Esophagus muscularis mucosa (tissue), 4 donors: ENCODE measurements at regions of chr19 and their contacts with region 1.

Region 1: DNA sequence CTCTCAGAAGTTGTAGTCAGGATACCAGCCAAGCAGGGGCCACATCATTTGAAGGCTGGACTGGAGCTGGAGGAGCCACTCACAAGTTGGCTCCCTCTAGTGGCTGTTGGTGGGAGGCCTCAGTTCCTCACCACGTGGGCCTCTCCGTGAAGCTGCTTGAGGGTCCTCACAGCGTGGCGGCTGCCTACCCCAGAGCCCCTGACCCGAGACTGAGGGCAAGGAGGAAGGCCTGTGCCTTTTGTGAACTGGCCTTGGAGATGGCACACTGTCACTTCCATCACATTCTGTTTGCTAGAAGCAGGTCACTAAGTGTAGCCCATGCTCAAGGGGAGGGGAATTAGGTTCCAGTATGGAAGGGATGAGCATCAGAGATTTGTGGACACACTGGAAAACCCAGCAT is 14.6 kb downstream of the GNA11 start:
- DNase-seq: no peak
- H3K4me3 ChIP-seq: no peak overlapping the region
- H3K27ac ChIP-seq: peak overlapping the region in 2 of 4 donors; percentile 22 to 45
- H3K4me1 ChIP-seq: peaks cover 39 to 76% (median 58%) of the 10 kb centered on the region in 4 donors
- H3K27me3 ChIP-seq: no peaks in the 10 kb centered on the region
- CTCF ChIP-seq: peak; percentile 72 to 91 (median 72)
- EP300 ChIP-seq: no peak
- POLR2A ChIP-seq: no peak

Region 2: GRCh38 chr19:2962045-2962561 is 146.7 kb before region 1 on chr19:
- intact Hi-C with region 1: loop called (anchors 5 kb)
- DNase-seq: peak; percentile 95
- H3K4me3 ChIP-seq: peak overlapping the region in 2 of 4 donors; percentile 24 to 42
- H3K27ac ChIP-seq: no peak overlapping the region
- H3K4me1 ChIP-seq: peaks cover 3 to 6% (median 5%) of the 10 kb centered on the region in 4 donors
- H3K27me3 ChIP-seq: no peaks in the 10 kb centered on the region
- CTCF ChIP-seq: peak; percentile 69 to 92 (median 73)
- EP300 ChIP-seq: no peak
- POLR2A ChIP-seq: no peak

Region 3: GRCh38 chr19:3075895-3076431 is 32.8 kb before region 1 on chr19:
- intact Hi-C with region 1: loop called (anchors 5 kb)
- DNase-seq: no peak
- H3K4me3 ChIP-seq: peak overlapping the region in 2 of 4 donors; percentile 16 to 21
- H3K27ac ChIP-seq: peak overlapping the region in 1 of 4 donors; percentile 29
- H3K4me1 ChIP-seq: peaks cover 14 to 39% (median 24%) of the 10 kb centered on the region in 4 donors
- H3K27me3 ChIP-seq: no peaks in the 10 kb centered on the region
- CTCF ChIP-seq: peak; percentile 97 to 99 (median 98)
- EP300 ChIP-seq: no peak
- POLR2A ChIP-seq: no peak

Region 4: DNA sequence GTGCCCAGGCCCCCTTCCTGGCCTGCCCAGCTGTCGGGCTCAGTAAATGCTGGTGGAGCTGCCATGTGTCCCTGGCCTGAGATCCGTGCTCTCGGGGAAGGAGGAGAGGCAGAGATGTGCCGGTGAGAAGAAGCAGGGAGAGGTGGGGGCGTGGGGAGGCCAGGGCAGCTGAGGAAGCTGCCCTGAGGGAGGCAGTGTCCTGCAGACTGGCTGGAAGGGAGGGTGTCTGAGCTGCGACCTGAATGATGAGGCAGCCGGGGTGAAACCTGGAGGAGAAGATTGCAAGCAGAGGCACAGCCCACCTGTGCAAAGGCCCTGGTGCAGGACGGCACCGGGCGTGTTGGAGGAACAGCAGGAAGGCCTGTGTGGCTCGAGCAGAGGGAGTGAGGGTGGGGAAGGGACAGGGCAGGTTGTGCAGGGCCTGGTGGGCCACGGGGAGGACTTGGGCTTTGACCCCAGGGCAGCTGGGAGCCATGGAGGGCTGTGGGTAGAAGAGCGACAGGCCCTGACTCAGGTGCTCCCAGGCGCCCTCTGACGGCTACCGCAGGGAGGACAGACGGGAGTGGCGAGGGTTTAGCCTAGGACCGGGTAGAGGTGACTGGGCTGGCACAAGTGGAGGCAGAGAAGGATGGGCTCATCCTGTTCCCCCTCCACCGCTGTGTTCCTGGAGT is 101.7 kb after region 1 on chr19:
- intact Hi-C with region 1: no loop called
- DNase-seq: no peak
- H3K4me3 ChIP-seq: no peak overlapping the region
- H3K27ac ChIP-seq: no peak overlapping the region
- H3K4me1 ChIP-seq: no peaks in the 10 kb centered on the region
- H3K27me3 ChIP-seq: no peaks in the 10 kb centered on the region
- CTCF ChIP-seq: peak; percentile 33 to 67 (median 35)
- EP300 ChIP-seq: no peak
- POLR2A ChIP-seq: no peak